Mammary epithelial cell (primary cell): ENCODE measurements at regions of chr2 and their contacts with region 1.

Region 1: GRCh38 chr2:177263451-177264208 is 897 bp downstream of the NFE2L2 start:
- DNase-seq: peak; percentile 99
- H3K4me3 ChIP-seq: peak overlapping the region; percentile 86 to 100 (median 95)
- H3K27ac ChIP-seq: peak overlapping the region; percentile 91
- H3K4me1 ChIP-seq: peaks cover 28% of the 10 kb centered on the region
- H3K27me3 ChIP-seq: no peaks in the 10 kb centered on the region
- CTCF ChIP-seq: peak; percentile 61 to 92

Region 2: GRCh38 chr2:177212106-177212890 is 51.3 kb before region 1 on chr2 and contains the start of gene HNRNPA3:
- CTCF ChIA-PET with region 1: no interaction called
- dilution Hi-C with region 1: no loop called
- in situ Hi-C with region 1: no loop called
- intact Hi-C with region 1: loop called (anchors 1 kb)
- DNase-seq: peak; percentile 99
- H3K4me3 ChIP-seq: peak within 1 kb of the TSS; percentile 81 to 100 (median 97)
- H3K27ac ChIP-seq: peak within 1 kb of the TSS; percentile 99
- H3K4me1 ChIP-seq: peaks cover 20% of the 10 kb centered on the region
- H3K27me3 ChIP-seq: no peaks in the 10 kb centered on the region
- CTCF ChIP-seq: peak in 1 of 2 donors; percentile 18
- total RNA-seq, gene HNRNPA3: 18.2 to 196 TPM

Region 3: DNA sequence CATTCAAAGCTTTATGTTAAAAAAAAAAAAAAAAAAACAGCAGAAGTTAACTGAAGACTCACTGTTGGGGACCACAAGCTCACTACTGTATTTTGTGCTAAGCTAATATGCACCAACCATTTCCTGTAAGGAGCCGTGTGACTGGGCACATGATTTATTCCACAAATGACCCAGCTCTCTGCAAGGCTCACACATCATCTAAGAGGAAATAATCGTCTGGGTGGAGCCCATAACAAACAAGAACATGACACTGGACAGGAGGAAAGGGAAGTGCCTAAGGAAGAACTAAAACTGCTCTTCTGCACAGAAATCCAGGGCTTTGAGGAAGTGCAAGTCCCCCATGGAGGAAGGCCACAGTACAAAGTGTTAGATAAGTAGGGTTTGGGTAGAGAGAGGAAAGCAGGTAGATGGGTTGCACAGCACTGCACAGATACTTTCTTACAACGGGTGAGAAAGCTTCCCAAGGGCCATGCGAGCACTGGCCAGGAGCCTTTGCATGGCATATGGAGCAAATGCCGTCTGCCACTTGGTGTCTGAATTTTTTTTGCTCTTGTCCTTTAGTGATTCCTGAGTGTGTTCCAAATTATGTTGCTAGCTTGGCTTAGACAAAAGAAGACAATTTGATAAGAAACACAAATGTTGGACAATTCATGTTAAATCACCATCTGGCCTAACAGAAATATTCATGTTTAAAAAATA is 23.5 kb before region 1 on chr2:
- CTCF ChIA-PET with region 1: no interaction called
- dilution Hi-C with region 1: no loop called
- in situ Hi-C with region 1: no loop called
- intact Hi-C with region 1: loop called (anchors 1 kb)
- DNase-seq: peak; percentile 52
- H3K4me3 ChIP-seq: no peak overlapping the region
- H3K27ac ChIP-seq: peak overlapping the region; percentile 92
- H3K4me1 ChIP-seq: peaks cover 45% of the 10 kb centered on the region
- H3K27me3 ChIP-seq: no peaks in the 10 kb centered on the region
- CTCF ChIP-seq: no peak

Region 4: DNA sequence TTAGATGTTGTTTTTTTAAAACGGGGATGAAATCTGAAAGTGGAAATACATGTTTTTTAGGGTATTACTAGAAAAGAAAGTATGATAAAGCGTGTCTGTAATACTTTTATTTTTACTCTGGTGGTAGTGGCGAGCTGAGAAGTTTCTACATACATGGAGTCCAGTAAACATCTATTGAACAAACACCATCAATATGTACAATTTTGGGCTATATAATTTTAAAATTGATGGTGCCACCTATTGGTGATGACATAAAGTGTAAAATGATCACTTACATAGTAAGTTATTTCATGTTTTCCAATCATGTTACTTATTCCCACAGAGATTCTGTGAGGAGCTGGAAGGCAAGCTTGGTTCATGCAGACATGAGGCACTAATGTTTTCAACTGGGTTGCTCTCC is 32.4 kb after region 1 on chr2:
- CTCF ChIA-PET with region 1: no interaction called
- dilution Hi-C with region 1: no loop called
- in situ Hi-C with region 1: no loop called
- intact Hi-C with region 1: loop called (anchors 1 kb)
- DNase-seq: peak; percentile 19
- H3K4me3 ChIP-seq: no peak overlapping the region
- H3K27ac ChIP-seq: no peak overlapping the region
- H3K4me1 ChIP-seq: peaks cover 4% of the 10 kb centered on the region
- H3K27me3 ChIP-seq: no peaks in the 10 kb centered on the region
- CTCF ChIP-seq: peak; percentile 35 to 43

Region 5: GRCh38 chr2:177375640-177376039 is 112.0 kb after region 1 on chr2:
- CTCF ChIA-PET with region 1: no interaction called
- dilution Hi-C with region 1: no loop called
- in situ Hi-C with region 1: no loop called
- intact Hi-C with region 1: no loop called
- DNase-seq: no peak
- H3K4me3 ChIP-seq: no peak overlapping the region
- H3K27ac ChIP-seq: no peak overlapping the region
- H3K4me1 ChIP-seq: no peaks in the 10 kb centered on the region
- H3K27me3 ChIP-seq: no peaks in the 10 kb centered on the region
- CTCF ChIP-seq: no peak

Region 6: DNA sequence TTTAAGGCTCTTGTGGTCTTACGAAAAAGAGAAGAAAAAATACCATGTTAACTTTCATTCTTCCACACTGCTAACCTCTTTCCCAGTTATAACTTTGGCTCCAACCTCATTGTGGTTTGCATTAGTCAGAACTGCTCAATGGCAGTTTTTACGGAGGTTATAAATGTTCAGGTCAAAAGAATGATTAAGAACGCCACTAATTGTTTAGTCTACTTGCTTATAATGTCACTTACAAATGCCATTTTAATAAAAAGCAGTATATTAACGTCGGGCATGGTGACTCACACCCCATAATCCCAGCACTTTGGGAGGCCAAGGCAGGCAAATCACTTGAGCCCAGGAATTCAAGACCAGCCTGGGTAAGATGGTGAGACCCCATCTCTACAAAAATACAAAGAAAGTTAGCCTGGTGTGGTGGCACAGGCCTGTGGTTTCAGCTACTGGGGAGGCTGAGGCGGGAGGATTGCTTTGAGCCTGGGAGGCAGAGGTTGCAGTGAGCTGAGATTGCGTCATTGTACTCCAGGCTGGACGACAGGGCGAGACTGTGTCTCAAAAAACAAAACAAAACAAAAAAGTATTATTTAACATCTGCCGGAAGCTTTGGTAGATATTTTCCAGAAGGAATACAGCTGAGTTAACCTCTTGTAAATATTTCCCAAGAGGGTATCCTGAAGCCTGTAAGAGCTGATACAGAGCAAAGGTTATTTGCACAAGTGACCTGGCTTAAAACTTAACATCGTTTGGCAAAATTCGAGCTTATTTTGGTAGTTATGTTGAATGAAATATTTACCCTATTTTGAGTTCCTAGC is 134.1 kb after region 1 on chr2:
- CTCF ChIA-PET with region 1: interaction called, 3 read pairs
- dilution Hi-C with region 1: no loop called
- in situ Hi-C with region 1: no loop called
- intact Hi-C with region 1: loop called (anchors 5 kb)
- DNase-seq: peak; percentile 77
- H3K4me3 ChIP-seq: no peak overlapping the region
- H3K27ac ChIP-seq: peak overlapping the region; percentile 40
- H3K4me1 ChIP-seq: peaks cover 30% of the 10 kb centered on the region
- H3K27me3 ChIP-seq: no peaks in the 10 kb centered on the region
- CTCF ChIP-seq: no peak

Region 7: DNA sequence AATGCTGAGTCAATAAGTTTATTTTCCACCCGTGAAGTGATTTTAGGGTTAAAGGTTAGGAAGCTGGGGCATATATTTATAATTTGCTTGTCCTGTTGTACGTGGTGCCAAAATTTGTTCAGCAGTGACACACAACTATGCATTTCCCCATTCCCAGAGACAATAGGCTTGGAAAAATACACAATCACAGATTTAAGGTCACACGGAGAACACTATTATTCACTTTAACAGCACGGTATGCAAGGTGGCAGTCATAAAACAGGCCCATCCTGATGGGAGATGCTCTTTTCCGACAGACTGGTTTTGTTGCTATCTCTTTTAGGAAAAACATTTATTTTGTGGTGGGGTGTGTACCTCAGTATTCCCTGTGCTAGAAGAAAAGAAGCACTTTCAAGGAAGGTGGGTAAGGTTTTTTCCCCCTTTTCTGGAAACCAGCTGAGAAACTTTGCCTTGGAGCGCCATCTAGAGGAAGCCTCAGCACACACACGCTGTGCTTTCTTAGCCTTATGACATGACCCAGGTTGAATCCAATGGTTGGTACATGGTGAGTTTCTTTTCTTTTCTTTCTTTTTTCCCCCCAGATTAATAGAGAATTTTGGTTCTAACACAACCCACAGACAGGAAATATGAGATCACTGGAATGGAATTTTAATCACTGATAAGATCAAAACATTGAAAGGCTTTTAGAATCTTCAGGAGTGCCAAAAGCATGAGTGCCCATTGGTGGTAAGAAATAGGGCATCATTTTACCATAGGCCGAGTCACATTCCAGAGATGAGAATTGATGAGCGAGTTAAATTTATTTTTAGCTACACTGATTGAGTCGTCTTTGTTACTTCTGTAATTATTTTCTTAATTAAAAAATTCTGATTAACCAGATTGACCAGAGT is 461.0 kb after region 1 on chr2:
- CTCF ChIA-PET with region 1: no interaction called
- dilution Hi-C with region 1: no loop called
- in situ Hi-C with region 1: no loop called
- intact Hi-C with region 1: loop called (anchors 2 kb)
- DNase-seq: peak; percentile 15
- H3K4me3 ChIP-seq: no peak overlapping the region
- H3K27ac ChIP-seq: no peak overlapping the region
- H3K4me1 ChIP-seq: no peaks in the 10 kb centered on the region
- H3K27me3 ChIP-seq: peaks cover 2% of the 10 kb centered on the region
- CTCF ChIP-seq: peak; percentile 91 to 95